ENCODE measurements at regions of chr1 and their contacts with region 1.

Region 1: GRCh38 chr1:66182551-66183178 is 351.3 kb upstream of the SGIP1 start:
- DNase-seq: peak; percentile 79
- H3K4me3 Mint-ChIP-seq: no peak overlapping the region
- H3K27ac Mint-ChIP-seq: peak overlapping the region; percentile 13
- H3K4me1 Mint-ChIP-seq: peaks cover 33% of the 10 kb centered on the region
- H3K27me3 Mint-ChIP-seq: no peaks in the 10 kb centered on the region

Region 2: DNA sequence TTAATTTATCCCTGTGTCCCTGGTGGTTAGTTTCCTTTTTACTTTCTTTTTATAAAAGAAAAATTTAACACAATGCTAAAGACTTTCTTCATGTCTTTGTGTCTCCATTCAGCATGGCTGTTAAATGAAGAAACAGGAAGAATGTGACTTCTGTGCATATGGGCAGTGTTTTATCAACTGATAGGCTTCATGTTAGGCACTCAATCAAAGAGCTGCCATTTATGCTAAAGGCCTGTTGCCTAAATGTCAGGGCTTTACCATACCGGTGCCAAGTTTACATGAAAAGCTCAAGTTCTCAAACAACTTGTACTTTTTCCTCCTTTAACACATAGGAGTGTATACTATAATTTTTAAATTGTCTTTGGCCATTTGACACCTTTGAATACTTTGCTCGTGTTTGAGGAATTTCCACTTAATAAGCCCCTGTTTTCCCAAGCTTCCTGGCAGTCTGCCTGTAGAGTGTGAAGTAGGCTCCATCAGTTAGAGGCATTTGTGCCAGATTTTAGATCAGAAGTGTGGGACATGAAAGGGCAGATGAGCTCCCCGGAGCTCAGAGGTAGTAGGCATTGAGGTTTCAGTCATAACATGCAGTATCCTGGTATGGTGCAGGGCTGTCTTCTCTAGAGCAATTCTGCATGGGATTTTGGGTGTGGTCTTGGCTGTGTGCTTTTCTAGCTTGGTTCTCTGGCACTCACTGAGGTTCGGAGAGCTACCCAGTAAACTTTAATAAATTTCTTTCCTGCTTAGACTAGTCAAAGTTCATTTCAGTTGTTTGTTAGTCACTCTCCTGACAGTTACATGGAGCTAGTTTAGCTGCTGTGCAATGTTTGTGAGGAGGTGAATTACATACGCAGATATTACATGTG is 643.2 kb before region 1 on chr1:
- CTCF ChIA-PET with region 1: no interaction called
- intact Hi-C with region 1: no loop called
- DNase-seq: no peak
- H3K4me3 Mint-ChIP-seq: no peak overlapping the region
- H3K27ac Mint-ChIP-seq: no peak overlapping the region
- H3K4me1 Mint-ChIP-seq: no peaks in the 10 kb centered on the region
- H3K27me3 Mint-ChIP-seq: peaks cover 2% of the 10 kb centered on the region

Region 3: GRCh38 chr1:66124670-66125069 is 58.0 kb before region 1 on chr1:
- CTCF ChIA-PET with region 1: no interaction called
- intact Hi-C with region 1: no loop called
- DNase-seq: no peak
- H3K4me3 Mint-ChIP-seq: no peak overlapping the region
- H3K27ac Mint-ChIP-seq: no peak overlapping the region
- H3K4me1 Mint-ChIP-seq: peaks cover 11% of the 10 kb centered on the region
- H3K27me3 Mint-ChIP-seq: peaks cover 10% of the 10 kb centered on the region

Region 4: DNA sequence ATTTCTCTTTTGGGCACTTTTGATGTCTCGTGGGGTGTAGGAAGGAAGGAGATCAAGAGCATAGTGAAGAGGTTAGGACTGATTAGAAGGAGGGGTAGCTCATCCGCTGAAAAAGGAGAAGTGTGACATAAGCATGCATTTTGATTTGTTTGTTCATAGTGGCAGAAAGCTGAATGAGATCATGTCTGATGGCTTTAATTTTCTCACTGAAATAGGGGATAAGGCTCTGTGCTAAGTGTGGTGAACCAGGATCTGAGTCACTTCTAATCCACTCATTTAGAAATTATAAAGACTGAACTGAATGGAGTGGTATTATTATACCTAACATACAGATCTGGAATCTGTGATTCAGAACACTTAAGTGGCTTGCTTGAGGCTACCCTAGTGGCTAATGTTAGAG is 45.4 kb before region 1 on chr1:
- CTCF ChIA-PET with region 1: no interaction called
- intact Hi-C with region 1: loop called (anchors 1 kb)
- DNase-seq: no peak
- H3K4me3 Mint-ChIP-seq: no peak overlapping the region
- H3K27ac Mint-ChIP-seq: no peak overlapping the region
- H3K4me1 Mint-ChIP-seq: peaks cover 8% of the 10 kb centered on the region
- H3K27me3 Mint-ChIP-seq: no peaks in the 10 kb centered on the region

Region 5: GRCh38 chr1:66168948-66169671 is 13.6 kb before region 1 on chr1:
- CTCF ChIA-PET with region 1: interaction called, 3 read pairs
- intact Hi-C with region 1: loop called (anchors 1 kb)
- DNase-seq: peak; percentile 7
- H3K4me3 Mint-ChIP-seq: no peak overlapping the region
- H3K27ac Mint-ChIP-seq: no peak overlapping the region
- H3K4me1 Mint-ChIP-seq: peaks cover 14% of the 10 kb centered on the region
- H3K27me3 Mint-ChIP-seq: peaks cover 4% of the 10 kb centered on the region

Region 6: DNA sequence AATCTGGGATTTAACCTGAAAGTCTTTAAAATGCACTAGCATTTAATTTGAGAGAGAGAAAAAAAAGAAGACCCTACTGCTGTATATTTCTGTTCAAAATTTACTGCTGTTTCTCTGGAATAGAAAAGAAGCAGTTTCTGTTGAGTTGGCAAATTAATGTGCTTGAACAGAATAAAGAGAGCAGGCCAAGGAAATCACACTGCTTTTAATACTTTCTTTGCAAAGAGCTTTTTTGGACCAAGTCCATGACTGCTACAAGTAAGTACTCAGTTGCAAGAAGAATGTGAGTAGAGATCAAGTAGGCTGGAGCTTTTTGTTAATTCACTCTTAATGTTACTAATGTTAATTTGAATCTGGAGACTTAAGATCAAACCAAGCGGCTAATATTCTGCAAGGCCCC is 15.1 kb after region 1 on chr1:
- CTCF ChIA-PET with region 1: no interaction called
- intact Hi-C with region 1: no loop called
- DNase-seq: no peak
- H3K4me3 Mint-ChIP-seq: no peak overlapping the region
- H3K27ac Mint-ChIP-seq: no peak overlapping the region
- H3K4me1 Mint-ChIP-seq: no peaks in the 10 kb centered on the region
- H3K27me3 Mint-ChIP-seq: no peaks in the 10 kb centered on the region

Region 7: GRCh38 chr1:66214901-66215300 is 32.2 kb after region 1 on chr1:
- CTCF ChIA-PET with region 1: no interaction called
- intact Hi-C with region 1: loop called (anchors 1 kb)
- DNase-seq: peak; percentile 57
- H3K4me3 Mint-ChIP-seq: no peak overlapping the region
- H3K27ac Mint-ChIP-seq: peak overlapping the region; percentile 1
- H3K4me1 Mint-ChIP-seq: peaks cover 17% of the 10 kb centered on the region
- H3K27me3 Mint-ChIP-seq: no peaks in the 10 kb centered on the region

Region 8: GRCh38 chr1:66231217-66231616 is 48.6 kb after region 1 on chr1:
- CTCF ChIA-PET with region 1: no interaction called
- intact Hi-C with region 1: loop called (anchors 1 kb)
- DNase-seq: no peak
- H3K4me3 Mint-ChIP-seq: no peak overlapping the region
- H3K27ac Mint-ChIP-seq: peak overlapping the region; percentile 5
- H3K4me1 Mint-ChIP-seq: peaks cover 11% of the 10 kb centered on the region
- H3K27me3 Mint-ChIP-seq: peaks cover 4% of the 10 kb centered on the region

Region 9: GRCh38 chr1:67535474-67535873 is 1352.8 kb after region 1 on chr1:
- CTCF ChIA-PET with region 1: no interaction called
- intact Hi-C with region 1: no loop called
- DNase-seq: peak; percentile 81
- H3K4me3 Mint-ChIP-seq: no peak overlapping the region
- H3K27ac Mint-ChIP-seq: no peak overlapping the region
- H3K4me1 Mint-ChIP-seq: no peaks in the 10 kb centered on the region
- H3K27me3 Mint-ChIP-seq: peaks cover 4% of the 10 kb centered on the region